Activated T-helper 1 cell treated with anti-CD3 and anti-CD28 coated beads, Interleukin-12 subunit alpha, Interleukin-12 subunit beta, Interleukin-2, Interleukin-4 antibody, amounts not matched to agents 30 ng/mL and 10 ng/mL and 1 ng/mL, durations not matched to agents 14 hours and 24 hours and 36 hours (primary cell): ENCODE measurements at regions of chr4 and their contacts with region 1.

Region 1: DNA sequence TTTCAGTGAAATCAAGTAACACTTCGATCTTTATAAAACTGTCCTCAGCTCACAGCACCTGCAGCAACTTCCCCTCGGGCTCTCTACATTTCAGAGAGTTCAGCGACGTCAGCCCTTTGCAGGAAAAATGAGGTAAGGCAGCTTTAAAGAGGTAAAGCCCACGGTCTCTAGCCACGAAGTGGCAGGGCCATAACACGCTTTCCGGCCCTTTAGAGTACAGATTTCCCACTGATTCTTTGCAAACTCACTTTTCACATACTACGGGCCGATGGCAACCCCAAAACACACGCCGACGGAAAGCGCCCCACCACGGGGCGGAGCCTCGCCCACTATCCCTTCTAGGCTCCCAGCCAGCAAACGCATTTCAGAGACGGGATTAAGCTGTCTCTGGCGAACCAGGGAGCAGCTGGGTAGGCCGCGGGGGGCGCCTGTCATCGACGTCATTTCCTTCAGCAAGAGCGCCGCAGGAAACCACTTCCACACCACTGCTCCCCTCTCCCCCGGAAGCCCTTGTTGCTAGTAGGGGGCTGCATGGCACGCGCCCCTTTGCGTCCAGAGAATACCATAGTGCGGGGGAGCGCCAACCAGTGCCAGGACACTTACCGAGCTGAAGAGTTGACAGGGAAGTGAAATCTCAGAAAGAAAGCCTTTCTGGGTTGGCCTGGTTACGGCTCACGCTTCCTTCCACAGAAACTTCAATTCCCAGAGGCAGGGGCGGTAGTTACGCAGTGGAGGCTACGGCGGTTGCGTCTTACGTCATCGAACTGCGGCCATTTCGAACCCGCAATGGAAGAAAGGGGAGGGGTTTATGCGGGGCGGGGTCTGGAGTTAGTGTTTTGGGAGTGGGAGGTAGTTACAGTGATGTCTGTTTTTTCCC is at the start of gene TRMT10A:
- DNase-seq: peak; percentile 92
- H3K4me3 Mint-ChIP-seq: peak within 1 kb of the TSS; percentile 89
- H3K27ac Mint-ChIP-seq: peak within 1 kb of the TSS; percentile 96
- H3K4me1 Mint-ChIP-seq: peaks cover 25% of the 10 kb centered on the region
- H3K27me3 Mint-ChIP-seq: peaks cover 11% of the 10 kb centered on the region
- total RNA-seq, gene TRMT10A: 7.3 TPM in 2 replicates

Region 2: DNA sequence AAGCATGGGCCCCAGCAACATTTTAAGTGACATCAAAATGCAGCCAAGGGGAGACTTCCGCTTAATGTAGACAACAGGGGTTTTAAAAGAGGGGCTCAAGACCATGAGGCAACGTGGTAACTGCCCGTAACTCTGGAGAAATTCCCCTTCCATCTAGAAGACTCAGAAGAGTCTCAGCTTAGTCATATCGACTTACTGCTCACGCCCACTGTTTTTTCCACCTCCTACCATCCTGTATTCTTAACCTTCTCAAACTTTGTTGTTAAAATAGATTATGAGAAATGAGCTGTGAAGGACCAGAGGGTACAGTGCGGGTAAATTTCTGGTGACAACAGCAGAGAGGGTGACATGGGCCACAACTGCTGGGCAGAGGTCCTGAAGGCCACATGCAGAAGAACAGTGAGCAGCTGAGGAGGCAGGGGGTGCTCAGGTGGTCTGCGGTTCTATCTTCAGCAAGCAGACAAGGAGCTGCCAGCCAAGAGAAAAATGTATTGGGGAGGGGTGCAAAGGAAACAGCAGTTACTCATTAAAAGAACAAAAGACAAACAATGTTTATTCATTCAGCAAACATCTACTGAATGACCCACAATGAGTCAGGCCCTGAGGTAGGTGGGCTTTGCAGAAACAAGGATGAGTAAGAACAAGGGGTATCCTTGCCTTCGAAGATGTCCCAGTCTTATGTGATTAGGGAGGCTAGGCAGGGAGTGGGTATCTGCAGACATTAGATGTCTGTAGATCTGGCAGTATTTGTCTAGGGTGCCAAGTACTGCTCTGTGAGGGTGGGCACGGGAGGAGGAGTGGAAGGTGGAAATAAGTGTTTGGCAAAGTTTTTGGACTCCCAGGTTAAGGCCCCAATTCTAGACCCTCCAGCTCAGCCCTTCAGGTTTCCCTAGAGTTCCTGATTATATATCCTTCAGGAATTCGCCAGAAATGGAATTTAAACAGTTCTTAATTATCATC is 1080.4 kb before region 1 on chr4:
- intact Hi-C with region 1: loop called (anchors 1 kb)
- DNase-seq: peak; percentile 40
- H3K4me3 Mint-ChIP-seq: peak overlapping the region; percentile 72
- H3K27ac Mint-ChIP-seq: peak overlapping the region; percentile 98
- H3K4me1 Mint-ChIP-seq: peaks cover 92% of the 10 kb centered on the region
- H3K27me3 Mint-ChIP-seq: no peaks in the 10 kb centered on the region

Region 3: DNA sequence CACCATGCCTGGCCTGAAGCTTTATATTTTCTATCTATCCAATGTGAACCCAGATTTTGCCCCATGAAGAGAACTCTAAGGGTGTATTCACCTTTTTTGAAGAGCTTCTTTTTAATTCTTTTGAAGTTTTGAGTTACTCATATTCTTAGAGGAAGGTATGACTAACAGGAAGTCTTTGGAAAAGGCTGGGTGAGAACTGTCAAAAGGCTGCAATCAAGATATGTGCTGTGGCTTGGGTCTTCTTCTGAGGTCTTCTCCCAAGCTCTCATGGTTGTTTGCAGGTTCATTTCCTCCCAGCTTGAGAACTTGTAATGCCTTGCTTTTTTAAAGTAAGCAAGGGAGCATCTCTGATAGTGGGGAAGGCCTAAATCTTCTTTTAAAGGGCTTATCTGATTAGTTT is 55.8 kb before region 1 on chr4:
- intact Hi-C with region 1: loop called (anchors 1 kb)
- DNase-seq: peak; percentile 50
- H3K4me3 Mint-ChIP-seq: peak overlapping the region; percentile 12
- H3K27ac Mint-ChIP-seq: peak overlapping the region; percentile 87
- H3K4me1 Mint-ChIP-seq: peaks cover 36% of the 10 kb centered on the region
- H3K27me3 Mint-ChIP-seq: peaks cover 2% of the 10 kb centered on the region

Region 4: DNA sequence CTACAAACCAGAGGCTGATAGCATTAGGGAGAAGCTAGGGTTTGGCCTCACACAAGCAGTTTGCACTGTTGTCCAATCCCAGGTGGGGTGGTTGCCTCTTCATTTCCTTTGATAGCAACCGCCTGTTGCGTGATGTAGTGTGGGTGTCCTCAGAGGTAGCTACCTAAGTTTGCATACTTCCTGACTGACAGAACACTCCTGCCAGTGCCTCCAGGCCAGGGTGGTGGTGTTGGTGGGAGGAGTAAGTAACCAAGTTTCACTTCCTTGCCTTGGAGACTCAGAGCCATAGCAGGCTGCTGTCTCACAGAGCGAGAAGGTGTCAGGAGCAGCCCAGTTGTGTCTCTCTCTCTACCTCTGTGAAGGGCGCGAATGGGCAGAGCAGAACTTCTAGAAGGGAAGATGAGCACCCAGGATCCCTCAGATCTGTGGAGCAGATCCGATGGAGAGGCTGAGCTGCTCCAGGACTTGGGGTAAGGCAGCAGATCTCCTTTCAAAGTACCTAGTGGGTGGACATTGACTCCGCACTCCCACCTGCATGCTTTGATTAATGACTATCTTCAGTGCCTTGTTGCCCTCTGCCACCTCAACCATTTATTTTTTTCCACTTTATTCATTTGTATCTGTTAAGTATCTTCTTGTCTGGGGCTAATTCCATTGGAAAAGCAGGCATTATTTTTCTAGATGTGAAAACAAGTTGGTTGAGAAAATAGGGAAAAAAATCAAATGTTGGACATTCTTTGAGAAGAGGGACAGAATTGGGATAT is 253.2 kb after region 1 on chr4 and contains the start of gene DAPP1:
- intact Hi-C with region 1: loop called (anchors 1 kb)
- DNase-seq: peak; percentile 79
- H3K4me3 Mint-ChIP-seq: peak within 1 kb of the TSS; percentile 92
- H3K27ac Mint-ChIP-seq: peak within 1 kb of the TSS; percentile 77
- H3K4me1 Mint-ChIP-seq: peaks cover 76% of the 10 kb centered on the region
- H3K27me3 Mint-ChIP-seq: no peaks in the 10 kb centered on the region
- total RNA-seq, gene DAPP1: 38.8 and 40.2 TPM in 2 replicates

Region 5: DNA sequence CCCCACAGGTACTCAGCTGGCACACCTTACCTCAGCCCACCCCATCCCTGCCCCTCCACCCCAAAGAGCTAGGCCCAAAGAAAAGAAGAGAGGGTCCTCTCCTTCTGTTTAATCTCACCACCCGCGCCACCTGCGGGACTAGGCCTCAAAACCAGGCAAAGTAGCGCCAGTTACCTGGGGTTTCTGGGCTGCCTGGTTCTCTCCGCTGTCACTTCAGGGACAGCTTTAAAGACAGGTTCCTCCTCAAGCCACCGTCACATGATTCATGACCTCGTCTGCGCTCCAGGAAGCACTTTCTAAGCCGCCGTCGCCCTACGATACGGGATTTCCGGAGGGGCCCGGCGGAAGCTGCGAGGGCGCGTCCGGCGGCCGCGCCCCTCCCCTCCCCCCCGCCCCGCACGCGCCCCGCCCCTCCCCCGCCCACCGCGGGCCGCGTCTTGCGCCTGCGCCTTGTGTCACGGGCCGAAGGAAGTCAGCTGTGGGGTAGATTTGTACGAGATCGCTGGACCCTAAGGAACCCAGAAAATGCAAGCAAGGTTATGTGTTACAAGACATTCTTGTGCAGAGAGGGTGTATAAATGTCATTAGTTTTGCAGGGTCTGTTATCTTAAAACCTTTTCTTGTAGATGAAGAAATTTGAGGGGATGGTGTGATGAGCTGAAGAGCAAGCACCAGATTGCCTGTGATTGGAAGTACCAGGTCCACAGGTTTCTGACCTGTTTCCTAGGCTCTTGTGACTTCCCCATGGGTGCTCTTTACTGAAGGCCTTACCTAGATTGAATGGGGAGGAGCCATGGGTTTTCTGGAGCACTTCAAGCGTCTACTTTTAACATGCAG is 330.8 kb after region 1 on chr4 and contains the start of gene LAMTOR3:
- intact Hi-C with region 1: loop called (anchors 1 kb)
- DNase-seq: peak; percentile 87
- H3K4me3 Mint-ChIP-seq: peak within 1 kb of the TSS; percentile 97
- H3K27ac Mint-ChIP-seq: peak within 1 kb of the TSS; percentile 95
- H3K4me1 Mint-ChIP-seq: peaks cover 42% of the 10 kb centered on the region
- H3K27me3 Mint-ChIP-seq: no peaks in the 10 kb centered on the region
- total RNA-seq, gene LAMTOR3: 28.6 and 29.7 TPM in 2 replicates